CD4-positive, alpha-beta memory T cell (primary cell): ENCODE measurements at regions of chr9 and their contacts with region 1.

Region 1: GRCh38 chr9:133184962-133185361 is 21.2 kb upstream of the GBGT1 start:
- DNase-seq: peak; percentile 32 to 60 (median 35)
- H3K4me3 ChIP-seq: no peak overlapping the region
- H3K4me3 Mint-ChIP-seq: peak overlapping the region in 1 of 8 donors; percentile 44
- H3K27ac ChIP-seq: no peak overlapping the region
- H3K27ac Mint-ChIP-seq: no peak overlapping the region
- H3K4me1 ChIP-seq: peaks cover 13% of the 10 kb centered on the region
- H3K4me1 Mint-ChIP-seq: peaks cover 8 to 10% (median 9%) of the 10 kb centered on the region in 4 donors
- H3K27me3 ChIP-seq: no peaks in the 10 kb centered on the region
- H3K27me3 Mint-ChIP-seq: peaks cover 15 to 26% of the 10 kb centered on the region in 2 donors

Region 2: DNA sequence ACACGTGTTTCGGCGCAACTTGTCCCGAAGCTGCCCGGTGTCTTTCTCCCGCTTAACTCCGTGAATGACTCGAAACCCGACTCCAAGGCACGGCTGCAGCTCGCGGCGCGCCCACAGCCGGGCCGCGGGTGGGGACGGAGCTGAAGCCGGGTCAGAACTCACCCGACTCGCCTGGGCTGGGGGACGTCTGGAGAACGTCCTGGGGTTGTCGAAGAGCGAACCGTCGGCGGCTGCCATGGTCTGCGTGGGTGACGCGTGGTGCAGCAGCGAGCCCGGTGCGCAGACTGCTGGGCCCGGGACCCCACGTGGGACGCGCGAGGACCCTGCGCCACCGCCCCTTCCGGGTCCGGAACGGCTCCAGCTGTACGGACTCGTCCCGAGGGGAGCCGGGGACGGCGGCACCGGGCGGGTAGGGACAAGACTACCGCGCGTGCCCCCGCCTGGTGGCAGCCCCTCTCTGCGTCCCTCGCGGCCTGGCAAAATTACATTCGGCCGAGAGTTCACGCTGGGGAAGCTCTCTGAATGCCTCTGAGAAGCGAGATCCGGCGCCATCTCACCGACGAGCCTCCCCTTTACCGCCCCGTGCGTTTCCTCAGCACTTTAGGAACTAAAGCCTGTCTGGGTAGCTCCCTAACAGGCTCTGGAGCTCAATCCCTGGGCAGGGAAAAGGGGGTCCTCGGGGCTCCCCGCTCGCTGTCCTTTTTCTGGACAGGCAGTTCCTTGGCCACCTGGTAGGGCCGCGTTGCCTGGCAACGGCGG is 515.1 kb before region 1 on chr9 and contains the start of gene DDX31:
- CTCF ChIA-PET with region 1: no interaction called
- POLR2A ChIA-PET with region 1: no interaction called
- intact Hi-C with region 1: no loop called
- DNase-seq: peak; percentile 89 to 93 (median 89)
- H3K4me3 ChIP-seq: peak within 1 kb of the TSS; percentile 88 to 97
- H3K4me3 Mint-ChIP-seq: peak within 1 kb of the TSS; percentile 88 to 95 (median 90)
- H3K27ac ChIP-seq: peak within 1 kb of the TSS; percentile 99
- H3K27ac Mint-ChIP-seq: peak within 1 kb of the TSS; percentile 93 to 100 (median 96)
- H3K4me1 ChIP-seq: peaks cover 42% of the 10 kb centered on the region
- H3K4me1 Mint-ChIP-seq: peaks cover 36 to 61% (median 44%) of the 10 kb centered on the region in 4 donors
- H3K27me3 ChIP-seq: no peaks in the 10 kb centered on the region
- H3K27me3 Mint-ChIP-seq: no peaks in the 10 kb centered on the region
- total RNA-seq, gene DDX31: 19.6 to 21.1 TPM

Region 3: DNA sequence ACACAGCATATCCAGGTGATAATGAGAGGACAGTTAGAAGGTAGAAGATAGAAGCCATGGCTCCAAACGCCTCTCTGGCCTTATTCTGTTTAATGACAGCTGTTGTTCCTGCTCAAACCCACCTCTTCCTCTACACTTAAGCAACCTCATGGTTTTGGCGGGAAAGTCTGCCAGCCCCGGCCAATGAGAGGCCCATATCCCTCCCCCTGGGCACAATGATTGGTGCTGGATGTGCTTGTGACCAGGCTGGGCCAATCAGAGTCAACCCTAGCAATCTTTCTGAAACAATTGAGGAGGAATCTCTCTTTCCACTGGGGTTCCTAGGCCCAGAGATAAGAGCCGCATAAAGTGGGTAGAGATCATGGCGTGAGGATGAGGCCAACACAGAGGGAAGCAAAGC is 211.2 kb before region 1 on chr9:
- CTCF ChIA-PET with region 1: no interaction called
- POLR2A ChIA-PET with region 1: no interaction called
- intact Hi-C with region 1: loop called (anchors 5 kb)
- DNase-seq: peak in 1 of 5 donors; percentile 9
- H3K4me3 ChIP-seq: no peak overlapping the region
- H3K4me3 Mint-ChIP-seq: no peak overlapping the region
- H3K27ac ChIP-seq: no peak overlapping the region
- H3K27ac Mint-ChIP-seq: no peak overlapping the region
- H3K4me1 ChIP-seq: peaks cover 10% of the 10 kb centered on the region
- H3K4me1 Mint-ChIP-seq: peaks cover 4 to 11% (median 6%) of the 10 kb centered on the region in 4 donors
- H3K27me3 ChIP-seq: peaks cover 4% of the 10 kb centered on the region
- H3K27me3 Mint-ChIP-seq: peaks cover 15 to 25% of the 10 kb centered on the region in 2 donors

Region 4: GRCh38 chr9:132997591-132997990 is 187.4 kb before region 1 on chr9:
- CTCF ChIA-PET with region 1: no interaction called
- POLR2A ChIA-PET with region 1: no interaction called
- intact Hi-C with region 1: no loop called
- DNase-seq: no peak
- H3K4me3 ChIP-seq: no peak overlapping the region
- H3K4me3 Mint-ChIP-seq: no peak overlapping the region
- H3K27ac ChIP-seq: no peak overlapping the region
- H3K27ac Mint-ChIP-seq: peak overlapping the region in 1 of 7 donors; percentile 13
- H3K4me1 ChIP-seq: no peaks in the 10 kb centered on the region
- H3K4me1 Mint-ChIP-seq: peaks cover 0 to 4% (median 0%) of the 10 kb centered on the region in 4 donors
- H3K27me3 ChIP-seq: peaks cover 4% of the 10 kb centered on the region
- H3K27me3 Mint-ChIP-seq: peaks cover 25 to 36% of the 10 kb centered on the region in 2 donors

Region 5: GRCh38 chr9:133149126-133150107 is 35.5 kb before region 1 on chr9:
- CTCF ChIA-PET with region 1: interaction called, 3 read pairs
- POLR2A ChIA-PET with region 1: no interaction called
- intact Hi-C with region 1: loop called (anchors 1 kb)
- DNase-seq: peak; percentile 78 to 89 (median 81)
- H3K4me3 ChIP-seq: peak overlapping the region in 1 of 2 donors; percentile 67
- H3K4me3 Mint-ChIP-seq: peak overlapping the region; percentile 60 to 86 (median 80)
- H3K27ac ChIP-seq: peak overlapping the region; percentile 90
- H3K27ac Mint-ChIP-seq: peak overlapping the region; percentile 81 to 100 (median 87)
- H3K4me1 ChIP-seq: peaks cover 42% of the 10 kb centered on the region
- H3K4me1 Mint-ChIP-seq: peaks cover 14 to 43% (median 31%) of the 10 kb centered on the region in 4 donors
- H3K27me3 ChIP-seq: no peaks in the 10 kb centered on the region
- H3K27me3 Mint-ChIP-seq: no peaks in the 10 kb centered on the region

Region 6: DNA sequence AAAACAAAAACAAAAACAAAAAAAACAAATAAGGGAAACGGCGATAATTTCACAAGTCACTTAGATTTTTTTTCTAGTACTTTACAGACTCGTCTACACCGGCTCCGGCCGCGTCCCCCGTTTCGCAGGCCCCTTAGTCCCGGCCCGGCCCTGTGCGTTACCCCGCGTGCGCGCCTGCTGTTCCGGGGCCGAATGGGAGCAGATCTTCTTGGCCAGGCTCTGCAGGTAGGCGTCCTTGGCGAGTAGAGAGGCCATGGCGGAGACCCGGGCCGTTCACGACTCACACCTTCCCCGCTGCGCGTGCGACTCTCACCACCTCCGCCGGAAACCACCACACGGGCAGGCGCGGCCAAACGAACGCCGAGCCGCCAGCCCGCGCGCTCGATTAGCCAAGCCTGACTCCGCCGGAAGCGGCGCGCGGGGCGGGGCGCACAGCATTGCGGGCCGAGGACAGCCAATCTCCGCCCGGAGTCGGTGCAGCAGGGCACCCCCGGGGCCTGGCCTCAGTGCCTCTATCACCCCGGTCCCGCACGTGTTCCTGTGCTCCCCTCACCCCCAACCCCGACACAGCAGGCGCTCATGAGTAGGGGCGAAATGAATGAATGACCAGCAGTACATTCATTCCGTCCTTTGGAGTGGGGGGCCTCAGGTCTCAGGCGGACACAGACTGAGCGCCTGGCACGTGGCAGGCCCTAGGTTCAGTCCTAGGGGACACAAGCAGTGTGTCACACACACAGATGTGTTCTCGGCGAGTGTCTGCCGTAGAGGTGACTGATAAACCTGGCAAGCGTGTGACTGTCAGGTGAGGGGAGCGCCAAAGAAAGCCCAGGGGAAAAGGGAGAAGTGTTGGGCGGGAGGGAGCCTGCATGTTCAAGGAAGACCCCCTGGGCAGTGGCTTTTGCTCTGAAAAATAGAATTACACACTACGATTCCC is 151.2 kb after region 1 on chr9 and contains the start of gene SURF6:
- CTCF ChIA-PET with region 1: interaction called, 10 read pairs
- POLR2A ChIA-PET with region 1: no interaction called
- intact Hi-C with region 1: no loop called
- DNase-seq: peak; percentile 93 to 94 (median 94)
- H3K4me3 ChIP-seq: peak within 1 kb of the TSS; percentile 50 to 69
- H3K4me3 Mint-ChIP-seq: peak within 1 kb of the TSS; percentile 92 to 97 (median 96)
- H3K27ac ChIP-seq: peak within 1 kb of the TSS; percentile 64
- H3K27ac Mint-ChIP-seq: peak within 1 kb of the TSS; percentile 86 to 96 (median 93)
- H3K4me1 ChIP-seq: peaks cover 41% of the 10 kb centered on the region
- H3K4me1 Mint-ChIP-seq: peaks cover 16 to 64% (median 28%) of the 10 kb centered on the region in 4 donors
- H3K27me3 ChIP-seq: no peaks in the 10 kb centered on the region
- H3K27me3 Mint-ChIP-seq: no peaks in the 10 kb centered on the region
- total RNA-seq, gene SURF6: 28.6 to 28.9 TPM

Region 7: GRCh38 chr9:133375724-133376654 is 191.0 kb after region 1 on chr9 and contains the starts of genes STKLD1 and SURF4:
- CTCF ChIA-PET with region 1: interaction called, 52 read pairs
- POLR2A ChIA-PET with region 1: interaction called, 3 read pairs
- intact Hi-C with region 1: loop called (anchors 1 kb)
- DNase-seq: peak; percentile 89 to 95 (median 92)
- H3K4me3 ChIP-seq: peak within 1 kb of the TSS; percentile 59 to 72
- H3K4me3 Mint-ChIP-seq: peak within 1 kb of the TSS; percentile 89 to 97 (median 92)
- H3K27ac ChIP-seq: peak within 1 kb of the TSS; percentile 89
- H3K27ac Mint-ChIP-seq: peak within 1 kb of the TSS; percentile 82 to 98 (median 96)
- H3K4me1 ChIP-seq: peaks cover 45% of the 10 kb centered on the region
- H3K4me1 Mint-ChIP-seq: peaks cover 27 to 40% (median 35%) of the 10 kb centered on the region in 4 donors
- H3K27me3 ChIP-seq: no peaks in the 10 kb centered on the region
- H3K27me3 Mint-ChIP-seq: no peaks in the 10 kb centered on the region
- total RNA-seq, gene STKLD1: 1.4 to 2.1 TPM
- total RNA-seq, gene SURF4: 103 to 110 TPM

Region 8: DNA sequence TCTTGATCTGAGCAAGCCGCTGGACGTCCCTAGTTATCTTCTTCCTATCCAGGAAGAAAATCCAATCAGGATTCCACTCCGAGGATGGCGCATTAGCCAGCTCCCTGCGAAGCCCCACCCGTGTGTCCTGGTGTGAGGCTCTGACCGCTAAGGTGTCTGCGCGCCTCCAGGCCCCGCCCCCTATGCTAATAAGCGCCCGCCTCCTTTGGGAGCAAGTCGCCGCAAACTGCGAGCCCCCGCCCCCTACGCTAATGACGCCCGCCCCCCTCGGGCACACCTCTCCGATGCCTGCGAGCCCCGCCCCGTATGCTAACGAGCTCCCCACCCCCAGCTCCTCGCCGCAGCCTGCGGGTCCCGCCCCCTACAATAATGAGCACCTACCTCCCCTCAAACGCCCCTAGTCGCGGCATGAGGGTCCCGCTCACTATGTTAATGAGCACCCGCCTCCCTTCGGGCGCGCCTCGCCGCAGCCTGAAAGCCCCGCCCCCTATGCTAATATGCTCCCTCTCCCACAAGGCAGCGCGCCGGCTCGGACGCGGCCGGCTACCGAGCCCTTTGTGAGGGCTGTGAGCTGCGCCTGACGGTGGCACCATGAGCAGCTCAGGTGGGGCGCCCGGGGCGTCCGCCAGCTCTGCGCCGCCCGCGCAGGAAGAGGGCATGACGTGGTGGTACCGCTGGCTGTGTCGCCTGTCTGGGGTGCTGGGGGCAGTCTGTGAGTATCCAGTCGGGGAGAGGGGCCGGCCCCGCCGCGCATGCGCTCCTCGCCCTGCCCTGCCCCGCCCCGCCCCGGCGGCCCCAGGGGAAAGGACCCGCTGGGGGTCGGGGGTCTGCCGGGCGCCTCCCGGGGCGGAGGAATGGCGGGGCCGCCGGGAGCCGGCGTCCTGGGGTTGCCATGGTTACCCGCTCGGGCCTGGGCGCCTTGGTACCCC is 274.8 kb after region 1 on chr9 and contains the start of gene CACFD1:
- CTCF ChIA-PET with region 1: interaction called, 10 read pairs
- POLR2A ChIA-PET with region 1: no interaction called
- intact Hi-C with region 1: no loop called
- DNase-seq: peak; percentile 87 to 95 (median 88)
- H3K4me3 ChIP-seq: peak within 1 kb of the TSS; percentile 36 to 87
- H3K4me3 Mint-ChIP-seq: peak within 1 kb of the TSS; percentile 88 to 96 (median 92)
- H3K27ac ChIP-seq: peak within 1 kb of the TSS; percentile 78
- H3K27ac Mint-ChIP-seq: peak within 1 kb of the TSS; percentile 93 to 97 (median 95)
- H3K4me1 ChIP-seq: peaks cover 10% of the 10 kb centered on the region
- H3K4me1 Mint-ChIP-seq: peaks cover 2 to 21% (median 6%) of the 10 kb centered on the region in 4 donors
- H3K27me3 ChIP-seq: no peaks in the 10 kb centered on the region
- H3K27me3 Mint-ChIP-seq: no peaks in the 10 kb centered on the region
- total RNA-seq, gene CACFD1: 2.5 to 2.6 TPM

Region 9: GRCh38 chr9:133485361-133486260 is 300.6 kb after region 1 on chr9:
- CTCF ChIA-PET with region 1: interaction called, 66 read pairs
- POLR2A ChIA-PET with region 1: interaction called, 3 read pairs
- intact Hi-C with region 1: loop called (anchors 1 kb)
- DNase-seq: no peak
- H3K4me3 ChIP-seq: peak overlapping the region in 1 of 2 donors; percentile 6
- H3K4me3 Mint-ChIP-seq: no peak overlapping the region
- H3K27ac ChIP-seq: no peak overlapping the region
- H3K27ac Mint-ChIP-seq: no peak overlapping the region
- H3K4me1 ChIP-seq: peaks cover 5% of the 10 kb centered on the region
- H3K4me1 Mint-ChIP-seq: peaks cover 0 to 4% (median 0%) of the 10 kb centered on the region in 4 donors
- H3K27me3 ChIP-seq: no peaks in the 10 kb centered on the region
- H3K27me3 Mint-ChIP-seq: peaks cover 7 to 14% of the 10 kb centered on the region in 2 donors

Region 10: GRCh38 chr9:133869674-133870405 is 684.9 kb after region 1 on chr9:
- CTCF ChIA-PET with region 1: no interaction called
- POLR2A ChIA-PET with region 1: no interaction called
- intact Hi-C with region 1: no loop called
- DNase-seq: no peak
- H3K4me3 ChIP-seq: no peak overlapping the region
- H3K4me3 Mint-ChIP-seq: peak overlapping the region in 6 of 8 donors; percentile 12 to 75 (median 56)
- H3K27ac ChIP-seq: no peak overlapping the region
- H3K27ac Mint-ChIP-seq: peak overlapping the region in 2 of 7 donors; percentile 9 to 11
- H3K4me1 ChIP-seq: peaks cover 11% of the 10 kb centered on the region
- H3K4me1 Mint-ChIP-seq: peaks cover 7 to 12% (median 9%) of the 10 kb centered on the region in 4 donors
- H3K27me3 ChIP-seq: no peaks in the 10 kb centered on the region
- H3K27me3 Mint-ChIP-seq: peaks cover 0 to 2% of the 10 kb centered on the region in 2 donors